Activated CD8-positive, alpha-beta T cell treated with anti-CD3 and anti-CD28 coated beads for 36 hours (primary cell): ENCODE measurements at regions of chr20 and their contacts with region 1.

Region 1: GRCh38 chr20:17938871-17939619 is 29.5 kb downstream of the SNX5 start:
- DNase-seq: peak; percentile 80
- ATAC-seq: peak; percentile 95
- H3K4me3 Mint-ChIP-seq: no peak overlapping the region
- H3K27ac Mint-ChIP-seq: peak overlapping the region; percentile 44
- H3K4me1 Mint-ChIP-seq: peaks cover 30% of the 10 kb centered on the region
- H3K27me3 Mint-ChIP-seq: no peaks in the 10 kb centered on the region
- CTCF ChIP-seq: peak; percentile 85

Region 2: DNA sequence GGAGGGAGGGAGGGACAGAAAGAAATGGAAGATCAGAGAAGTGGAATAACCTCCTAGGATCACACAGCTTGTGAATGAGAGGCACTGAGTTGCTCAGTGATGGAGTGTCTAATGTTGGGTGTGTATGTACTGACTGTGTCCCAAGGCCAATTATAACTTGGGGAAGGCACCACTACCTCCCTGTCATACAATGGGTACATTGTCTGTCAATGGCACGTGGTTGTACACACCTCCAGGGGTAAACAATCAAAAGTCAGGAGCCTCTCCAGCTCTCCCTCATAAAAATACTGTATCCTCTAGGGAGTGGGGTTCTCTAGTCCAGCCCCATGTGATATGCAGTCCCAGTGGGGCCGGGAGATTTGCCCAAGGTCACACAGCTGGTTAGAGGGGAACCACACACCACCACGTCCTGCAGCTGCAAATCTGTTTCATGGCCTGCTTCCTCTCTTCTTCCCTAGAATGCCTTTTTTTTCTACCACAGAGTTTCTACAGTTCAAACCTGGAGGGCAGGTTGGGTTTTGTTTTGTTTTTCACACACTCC is 83.0 kb before region 1 on chr20:
- CTCF ChIA-PET with region 1: no interaction called
- POLR2A ChIA-PET with region 1: no interaction called
- intact Hi-C with region 1: no loop called
- DNase-seq: peak; percentile 29
- ATAC-seq: peak; percentile 9
- H3K4me3 Mint-ChIP-seq: no peak overlapping the region
- H3K27ac Mint-ChIP-seq: no peak overlapping the region
- H3K4me1 Mint-ChIP-seq: peaks cover 28% of the 10 kb centered on the region
- H3K27me3 Mint-ChIP-seq: peaks cover 4% of the 10 kb centered on the region
- CTCF ChIP-seq: no peak

Region 3: GRCh38 chr20:17875106-17875980 is 63.7 kb before region 1 on chr20:
- CTCF ChIA-PET with region 1: no interaction called
- POLR2A ChIA-PET with region 1: no interaction called
- intact Hi-C with region 1: no loop called
- DNase-seq: no peak
- ATAC-seq: no peak
- H3K4me3 Mint-ChIP-seq: no peak overlapping the region
- H3K27ac Mint-ChIP-seq: no peak overlapping the region
- H3K4me1 Mint-ChIP-seq: peaks cover 30% of the 10 kb centered on the region
- H3K27me3 Mint-ChIP-seq: peaks cover 11% of the 10 kb centered on the region
- CTCF ChIP-seq: no peak

Region 4: GRCh38 chr20:17898548-17898994 is 40.5 kb before region 1 on chr20:
- CTCF ChIA-PET with region 1: interaction called, 13 read pairs
- POLR2A ChIA-PET with region 1: no interaction called
- intact Hi-C with region 1: no loop called
- DNase-seq: peak; percentile 81
- ATAC-seq: peak; percentile 67
- H3K4me3 Mint-ChIP-seq: no peak overlapping the region
- H3K27ac Mint-ChIP-seq: no peak overlapping the region
- H3K4me1 Mint-ChIP-seq: peaks cover 19% of the 10 kb centered on the region
- H3K27me3 Mint-ChIP-seq: peaks cover 21% of the 10 kb centered on the region
- CTCF ChIP-seq: peak; percentile 95

Region 5: DNA sequence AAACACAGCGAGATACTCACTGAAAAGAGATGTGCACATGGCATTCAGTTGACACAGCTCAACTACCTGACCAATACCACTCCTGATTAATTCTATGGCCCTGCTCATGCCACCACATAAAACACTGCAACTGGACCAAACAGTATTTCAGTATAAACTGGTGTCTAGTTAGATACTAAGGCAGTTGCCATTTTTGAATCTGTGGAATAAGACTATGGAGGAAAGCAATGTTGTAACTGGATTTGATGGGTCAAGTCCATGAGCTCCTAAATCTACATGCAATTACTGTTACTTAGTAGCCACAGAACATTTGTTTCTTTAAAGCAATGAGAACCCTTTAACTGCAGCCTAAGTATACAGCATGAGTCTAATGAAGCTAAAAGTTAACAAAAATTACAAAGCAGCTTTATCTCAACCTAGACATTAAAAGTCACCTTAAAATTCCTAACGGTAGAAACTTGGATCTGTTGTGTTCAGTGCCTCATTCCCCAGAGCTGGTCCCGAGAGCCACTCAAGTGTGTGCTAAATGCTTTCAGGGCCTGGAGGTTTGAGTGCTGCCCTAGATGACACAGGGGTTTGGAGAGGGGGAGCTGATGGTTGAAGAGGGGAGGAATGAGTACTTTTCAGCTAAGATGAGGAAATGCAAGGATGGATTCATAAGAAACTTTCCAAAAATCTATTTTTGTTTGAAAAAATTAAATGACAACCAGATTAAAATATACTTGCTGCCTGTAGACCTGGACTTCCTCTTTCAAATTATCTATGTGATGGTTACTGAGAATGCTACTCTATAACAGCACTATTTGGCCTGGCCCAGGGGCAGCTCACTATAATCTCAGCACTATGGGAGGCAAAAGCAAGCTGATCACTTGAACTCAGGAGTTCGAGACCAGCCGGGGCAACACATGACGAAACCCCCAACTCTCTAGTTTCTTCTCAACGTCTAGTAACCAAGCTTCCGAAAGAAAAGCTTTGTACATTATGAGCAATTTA is 13.9 kb after region 1 on chr20:
- CTCF ChIA-PET with region 1: interaction called, 35 read pairs
- POLR2A ChIA-PET with region 1: no interaction called
- intact Hi-C with region 1: no loop called
- DNase-seq: no peak
- ATAC-seq: no peak
- H3K4me3 Mint-ChIP-seq: no peak overlapping the region
- H3K27ac Mint-ChIP-seq: peak overlapping the region; percentile 68
- H3K4me1 Mint-ChIP-seq: peaks cover 23% of the 10 kb centered on the region
- H3K27me3 Mint-ChIP-seq: no peaks in the 10 kb centered on the region
- CTCF ChIP-seq: no peak

Region 6: GRCh38 chr20:17958373-17959256 is 19.6 kb after region 1 on chr20:
- CTCF ChIA-PET with region 1: interaction called, 12 read pairs
- POLR2A ChIA-PET with region 1: no interaction called
- intact Hi-C with region 1: no loop called
- DNase-seq: no peak
- ATAC-seq: no peak
- H3K4me3 Mint-ChIP-seq: no peak overlapping the region
- H3K27ac Mint-ChIP-seq: peak overlapping the region; percentile 56
- H3K4me1 Mint-ChIP-seq: peaks cover 73% of the 10 kb centered on the region
- H3K27me3 Mint-ChIP-seq: no peaks in the 10 kb centered on the region
- CTCF ChIP-seq: no peak